Activated T-helper 2 cell treated with anti-CD3 and anti-CD28 coated beads, Interferon-gamma antibody, Interleukin-2, Interleukin-4, amounts not matched to agents 10 μg/mL and 5 μg/mL and 100 μg/mL, durations not matched to agents 14 hours and 24 hours and 36 hours (primary cell): ENCODE measurements at regions of chr7 and their contacts with region 1.

Region 1: GRCh38 chr7:36430186-36430585 is 40.5 kb downstream of the ANLN start:
- DNase-seq: no peak
- H3K4me3 Mint-ChIP-seq: no peak overlapping the region
- H3K27ac Mint-ChIP-seq: no peak overlapping the region
- H3K4me1 Mint-ChIP-seq: peaks cover 4% of the 10 kb centered on the region
- H3K27me3 Mint-ChIP-seq: no peaks in the 10 kb centered on the region

Region 2: DNA sequence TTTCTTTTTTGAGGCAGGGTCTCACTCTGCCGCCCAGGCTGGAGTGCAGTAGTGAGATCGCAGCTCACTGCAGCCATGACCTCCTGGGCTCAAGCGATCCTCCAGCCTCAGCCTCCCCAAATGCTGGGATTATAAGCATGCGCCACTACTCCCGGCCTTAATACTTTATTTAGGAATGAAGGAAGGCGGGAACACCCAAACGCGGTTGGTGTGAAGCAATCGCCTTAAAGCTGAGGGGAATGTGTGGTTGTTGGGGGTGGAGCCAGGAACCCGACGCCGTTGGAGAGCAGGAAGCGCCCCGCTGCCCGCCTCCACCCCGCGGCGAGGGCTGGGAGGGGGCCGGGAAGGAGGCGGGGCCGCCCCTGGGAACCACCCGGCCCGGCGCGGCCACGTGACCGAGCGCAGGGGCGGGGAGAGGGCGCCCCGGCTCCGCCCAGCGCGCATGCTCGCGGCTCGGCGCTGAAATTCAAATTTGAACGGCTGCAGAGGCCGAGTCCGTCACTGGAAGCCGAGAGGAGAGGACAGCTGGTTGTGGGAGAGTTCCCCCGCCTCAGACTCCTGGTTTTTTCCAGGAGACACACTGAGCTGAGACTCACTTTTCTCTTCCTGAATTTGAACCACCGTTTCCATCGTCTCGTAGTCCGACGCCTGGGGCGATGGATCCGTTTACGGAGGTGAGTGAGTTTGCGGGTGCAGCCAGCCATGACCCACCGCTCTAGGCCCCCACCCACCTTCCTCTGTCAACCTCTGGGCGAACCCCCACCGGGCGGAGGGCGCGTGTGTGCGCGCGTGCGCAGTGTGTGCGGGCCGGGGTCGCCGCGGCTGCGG is 40.6 kb before region 1 on chr7 and contains the start of gene ANLN:
- intact Hi-C with region 1: no loop called
- DNase-seq: peak; percentile 83
- H3K4me3 Mint-ChIP-seq: peak within 1 kb of the TSS; percentile 89
- H3K27ac Mint-ChIP-seq: peak within 1 kb of the TSS; percentile 79
- H3K4me1 Mint-ChIP-seq: peaks cover 33% of the 10 kb centered on the region
- H3K27me3 Mint-ChIP-seq: peaks cover 7% of the 10 kb centered on the region
- total RNA-seq, gene ANLN: 38.0 and 38.7 TPM in 2 replicates

Region 3: GRCh38 chr7:38195804-38196595 is 1765.8 kb after region 1 on chr7:
- intact Hi-C with region 1: loop called (anchors 5 kb)
- DNase-seq: no peak
- H3K4me3 Mint-ChIP-seq: no peak overlapping the region
- H3K27ac Mint-ChIP-seq: no peak overlapping the region
- H3K4me1 Mint-ChIP-seq: peaks cover 15% of the 10 kb centered on the region
- H3K27me3 Mint-ChIP-seq: no peaks in the 10 kb centered on the region